ENCODE measurements at regions of chr9 and their contacts with region 1.

Region 1: GRCh38 chr9:125261501-125262293 is at the start of gene GAPVD1:
- DNase-seq: peak; percentile 97
- H3K4me3 Mint-ChIP-seq: peak within 1 kb of the TSS; percentile 97
- H3K27ac Mint-ChIP-seq: peak within 1 kb of the TSS; percentile 94
- H3K4me1 Mint-ChIP-seq: peaks cover 31% of the 10 kb centered on the region
- H3K27me3 Mint-ChIP-seq: peaks cover 3% of the 10 kb centered on the region
- total RNA-seq, gene GAPVD1: 50.3 and 56.6 TPM in 2 replicates

Region 2: GRCh38 chr9:125200210-125201047 is 61.3 kb before region 1 on chr9 and contains the start of gene RABEPK:
- intact Hi-C with region 1: loop called (anchors 2 kb)
- DNase-seq: peak; percentile 98
- H3K4me3 Mint-ChIP-seq: peak within 1 kb of the TSS; percentile 95
- H3K27ac Mint-ChIP-seq: peak within 1 kb of the TSS; percentile 92
- H3K4me1 Mint-ChIP-seq: peaks cover 14% of the 10 kb centered on the region
- H3K27me3 Mint-ChIP-seq: peaks cover 5% of the 10 kb centered on the region
- total RNA-seq, gene RABEPK: 36.6 and 37.7 TPM in 2 replicates

Region 3: DNA sequence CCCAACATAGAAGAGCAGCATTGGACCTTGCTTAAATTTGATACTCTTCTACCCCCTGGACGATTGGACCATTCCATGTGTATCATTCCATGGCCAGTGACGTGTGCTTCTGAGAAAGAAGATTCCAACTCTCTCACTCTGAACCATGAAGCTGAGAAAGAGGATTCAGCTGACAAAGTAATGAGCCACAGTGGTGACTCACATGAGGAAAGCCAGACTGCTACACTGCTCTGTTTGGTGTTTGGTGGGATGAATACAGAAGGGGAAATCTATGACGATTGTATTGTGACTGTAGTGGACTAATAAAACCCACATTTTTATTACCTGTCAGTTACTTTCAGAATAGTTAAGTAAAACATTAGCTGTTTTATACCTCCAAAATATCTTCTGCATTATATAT is 28.0 kb before region 1 on chr9:
- intact Hi-C with region 1: no loop called
- DNase-seq: no peak
- H3K4me3 Mint-ChIP-seq: no peak overlapping the region
- H3K27ac Mint-ChIP-seq: no peak overlapping the region
- H3K4me1 Mint-ChIP-seq: peaks cover 32% of the 10 kb centered on the region
- H3K27me3 Mint-ChIP-seq: no peaks in the 10 kb centered on the region

Measured in activated CD4-positive, alpha-beta T cell treated with anti-CD3 and anti-CD28 coated beads, Interleukin-2, amount 10 ng/mL, durations not matched to agents 24 days and 14 days (primary cell).